ENCODE measurements at regions of chr3 and their contacts with region 1.

Region 1: DNA sequence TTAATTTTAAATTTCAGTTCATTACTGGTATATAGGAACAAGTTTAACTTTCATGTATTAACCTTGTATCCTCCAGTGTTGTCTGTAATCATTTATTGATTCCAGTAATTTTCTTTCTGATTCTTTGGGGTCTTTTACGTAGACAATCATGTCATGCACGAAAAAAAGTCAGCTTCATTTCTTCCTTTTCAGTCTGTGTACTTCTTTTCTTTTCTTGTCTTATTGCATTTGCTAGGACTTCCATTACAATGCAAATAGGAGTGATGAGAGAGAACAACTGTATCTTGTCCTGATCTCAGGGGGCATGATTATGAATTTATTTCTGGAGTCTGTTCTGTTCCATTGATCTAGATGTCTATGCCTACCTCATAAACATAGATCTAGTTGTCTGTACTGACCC is 56.5 kb downstream of the STT3B start:
- DNase-seq: no peak
- ATAC-seq: no peak

Region 2: DNA sequence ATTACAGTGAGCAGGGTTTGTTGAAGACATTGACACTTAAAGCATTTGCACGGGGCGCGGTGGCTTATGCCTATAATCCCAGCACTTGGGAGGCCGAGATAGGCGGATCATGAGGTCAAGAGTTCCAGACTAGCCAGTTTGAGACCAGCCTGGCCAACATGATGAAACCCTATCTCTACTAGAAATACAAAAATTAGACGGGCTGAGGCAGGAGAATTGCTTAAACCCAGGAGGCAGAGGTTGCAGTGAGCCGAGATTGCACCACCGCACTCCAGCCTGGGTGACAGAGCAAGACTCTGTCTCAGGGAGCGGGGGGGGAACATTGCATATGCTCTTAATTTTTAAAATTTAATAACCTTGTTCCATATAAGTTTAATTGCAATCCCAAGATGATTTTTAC is 44.6 kb before region 1 on chr3:
- intact Hi-C with region 1: loop called (anchors 5 kb)
- DNase-seq: no peak
- ATAC-seq: peak; percentile 77

Measured in Right ventricle myocardium inferior (tissue), 1 donor.